OCI-LY7 (cell line): ENCODE measurements at regions of chr3 and their contacts with region 1.

Region 1: DNA sequence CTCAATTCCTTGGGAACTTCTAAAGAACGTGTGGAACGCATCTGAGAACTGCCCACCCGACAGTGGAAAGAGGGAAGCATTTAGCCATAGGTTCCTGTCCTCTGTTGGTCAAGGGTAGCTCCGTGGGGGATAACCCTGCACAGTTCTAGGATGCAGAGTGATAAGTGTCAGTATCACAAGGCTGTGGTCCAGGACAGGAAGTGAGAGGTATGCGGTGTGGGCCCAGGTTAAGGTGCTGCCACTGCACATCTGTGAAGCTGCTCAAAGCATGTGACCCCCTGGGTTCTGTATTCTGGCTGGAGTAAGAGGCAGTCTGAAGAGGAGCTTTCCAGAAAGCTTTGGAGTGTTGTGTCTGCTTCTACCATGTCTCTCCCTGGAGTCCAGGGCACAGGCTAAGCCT is 51.7 kb upstream of the HES1 start:
- DNase-seq: peak; percentile 70
- H3K4me3 ChIP-seq: peak overlapping the region; percentile 0
- H3K27ac ChIP-seq: peak overlapping the region; percentile 33
- H3K4me1 ChIP-seq: peaks cover 55% of the 10 kb centered on the region
- CTCF ChIP-seq: no peak

Region 2: GRCh38 chr3:194070634-194071409 is 13.5 kb before region 1 on chr3:
- CTCF ChIA-PET with region 1: interaction called, 16 read pairs
- POLR2A ChIA-PET with region 1: interaction called, 45 read pairs
- intact Hi-C with region 1: no loop called
- DNase-seq: peak; percentile 86
- H3K4me3 ChIP-seq: peak overlapping the region; percentile 61
- H3K27ac ChIP-seq: peak overlapping the region; percentile 54
- H3K4me1 ChIP-seq: peaks cover 57% of the 10 kb centered on the region
- CTCF ChIP-seq: no peak

Region 3: GRCh38 chr3:194503081-194503531 is 418.8 kb after region 1 on chr3:
- CTCF ChIA-PET with region 1: no interaction called
- POLR2A ChIA-PET with region 1: no interaction called
- intact Hi-C with region 1: no loop called
- DNase-seq: no peak
- H3K4me3 ChIP-seq: no peak overlapping the region
- H3K27ac ChIP-seq: no peak overlapping the region
- H3K4me1 ChIP-seq: no peaks in the 10 kb centered on the region
- CTCF ChIP-seq: no peak